Adrenal gland (tissue), 19 donors: ENCODE measurements at regions of chr15 and their contacts with region 1.

Region 1: GRCh38 chr15:36688310-36689011 is 109.0 kb downstream of the CDIN1 start:
- DNase-seq: no peak
- H3K4me3 ChIP-seq: no peak overlapping the region
- H3K27ac ChIP-seq: no peak overlapping the region
- H3K4me1 ChIP-seq: no peaks in the 10 kb centered on the region
- H3K27me3 ChIP-seq: no peaks in the 10 kb centered on the region
- CTCF ChIP-seq: no peak
- POLR2A ChIP-seq: no peak

Region 2: GRCh38 chr15:36784098-36784670 is 95.7 kb after region 1 on chr15:
- intact Hi-C with region 1: loop called in 1 of 2 experiments (anchors 10 kb)
- DNase-seq: no peak
- H3K4me3 ChIP-seq: peak overlapping the region in 1 of 4 donors; percentile 27
- H3K27ac ChIP-seq: no peak overlapping the region
- H3K4me1 ChIP-seq: peaks cover 6 to 21% of the 10 kb centered on the region in 2 donors
- H3K27me3 ChIP-seq: no peaks in the 10 kb centered on the region
- CTCF ChIP-seq: no peak
- POLR2A ChIP-seq: no peak